ENCODE measurements at regions of chr12 and their contacts with region 1.

Region 1: GRCh38 chr12:6851921-6852650 is at the start of gene USP5:
- DNase-seq: peak; percentile 97 to 99 (median 99)
- H3K4me3 ChIP-seq: peak within 1 kb of the TSS; percentile 97
- H3K4me3 Mint-ChIP-seq: peak within 1 kb of the TSS; percentile 86 to 99 (median 94)
- H3K27ac ChIP-seq: peak within 1 kb of the TSS; percentile 77
- H3K27ac Mint-ChIP-seq: peak within 1 kb of the TSS; percentile 99 to 100 (median 100)
- H3K4me1 ChIP-seq: peaks cover 18% of the 10 kb centered on the region
- H3K4me1 Mint-ChIP-seq: peaks cover 20 to 38% (median 20%) of the 10 kb centered on the region in 3 donors
- H3K27me3 ChIP-seq: no peaks in the 10 kb centered on the region
- H3K27me3 Mint-ChIP-seq: no peaks in the 10 kb centered on the region
- total RNA-seq, gene USP5: 154 TPM

Region 2: GRCh38 chr12:6723607-6724396 is 128.3 kb before region 1 on chr12 and contains the start of gene COPS7A:
- CTCF ChIA-PET with region 1: interaction called, 9 read pairs
- POLR2A ChIA-PET with region 1: interaction called, 11 read pairs
- DNase-seq: peak; percentile 90 to 96 (median 92)
- H3K4me3 ChIP-seq: peak within 1 kb of the TSS; percentile 77
- H3K4me3 Mint-ChIP-seq: peak within 1 kb of the TSS; percentile 84 to 91 (median 87)
- H3K27ac ChIP-seq: peak within 1 kb of the TSS; percentile 67
- H3K27ac Mint-ChIP-seq: peak within 1 kb of the TSS; percentile 90 to 100 (median 97)
- H3K4me1 ChIP-seq: peaks cover 19% of the 10 kb centered on the region
- H3K4me1 Mint-ChIP-seq: peaks cover 22 to 32% (median 23%) of the 10 kb centered on the region in 3 donors
- H3K27me3 ChIP-seq: no peaks in the 10 kb centered on the region
- H3K27me3 Mint-ChIP-seq: no peaks in the 10 kb centered on the region
- total RNA-seq, gene COPS7A: 48.8 to 49.7 TPM

Region 3: GRCh38 chr12:6788972-6789924 is 62.8 kb before region 1 on chr12 and contains the start of gene CD4:
- CTCF ChIA-PET with region 1: no interaction called
- POLR2A ChIA-PET with region 1: no interaction called
- DNase-seq: no peak
- H3K4me3 ChIP-seq: peak within 1 kb of the TSS; percentile 86
- H3K4me3 Mint-ChIP-seq: peak within 1 kb of the TSS in 1 of 7 donors; percentile 7
- H3K27ac ChIP-seq: no peak within 1 kb of the TSS
- H3K27ac Mint-ChIP-seq: peak within 1 kb of the TSS in 1 of 8 donors; percentile 38
- H3K4me1 ChIP-seq: peaks cover 52% of the 10 kb centered on the region
- H3K4me1 Mint-ChIP-seq: peaks cover 17 to 28% (median 21%) of the 10 kb centered on the region in 3 donors
- H3K27me3 ChIP-seq: no peaks in the 10 kb centered on the region
- H3K27me3 Mint-ChIP-seq: peaks cover 3 to 5% of the 10 kb centered on the region in 2 donors
- total RNA-seq, gene CD4: 1.2 to 1.8 TPM

Region 4: DNA sequence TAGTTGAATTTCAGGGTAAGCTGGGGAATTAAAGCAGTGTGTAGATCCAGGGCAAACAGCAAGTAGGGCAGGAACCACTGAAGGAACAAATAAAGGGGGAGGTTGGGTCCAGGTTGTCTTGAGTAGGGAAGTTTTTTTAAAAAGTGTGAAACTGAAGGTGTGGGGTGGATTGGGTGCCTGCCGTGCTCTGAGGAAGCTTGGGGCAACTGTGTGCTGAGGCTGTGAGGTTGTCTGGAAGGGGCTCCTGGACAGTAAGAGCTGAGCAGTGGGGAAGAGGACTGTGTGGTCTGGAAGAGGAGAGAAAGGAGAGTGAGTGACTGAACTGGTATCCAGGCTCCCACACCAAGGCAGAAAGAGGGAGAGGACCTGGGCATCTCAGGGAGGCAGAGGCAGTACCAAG is 41.3 kb before region 1 on chr12:
- CTCF ChIA-PET with region 1: no interaction called
- POLR2A ChIA-PET with region 1: no interaction called
- DNase-seq: no peak
- H3K4me3 ChIP-seq: no peak overlapping the region
- H3K4me3 Mint-ChIP-seq: no peak overlapping the region
- H3K27ac ChIP-seq: no peak overlapping the region
- H3K27ac Mint-ChIP-seq: peak overlapping the region in 2 of 8 donors; percentile 23 to 39
- H3K4me1 ChIP-seq: no peaks in the 10 kb centered on the region
- H3K4me1 Mint-ChIP-seq: no peaks in the 10 kb centered on the region
- H3K27me3 ChIP-seq: no peaks in the 10 kb centered on the region
- H3K27me3 Mint-ChIP-seq: peaks cover 3 to 10% of the 10 kb centered on the region in 2 donors

Region 5: GRCh38 chr12:6825398-6826124 is 26.5 kb before region 1 on chr12:
- CTCF ChIA-PET with region 1: interaction called, 91 read pairs
- POLR2A ChIA-PET with region 1: interaction called, 23 read pairs
- DNase-seq: peak; percentile 62 to 80 (median 71)
- H3K4me3 ChIP-seq: no peak overlapping the region
- H3K4me3 Mint-ChIP-seq: peak overlapping the region in 1 of 7 donors; percentile 70
- H3K27ac ChIP-seq: no peak overlapping the region
- H3K27ac Mint-ChIP-seq: no peak overlapping the region
- H3K4me1 ChIP-seq: peaks cover 18% of the 10 kb centered on the region
- H3K4me1 Mint-ChIP-seq: peaks cover 20 to 36% (median 24%) of the 10 kb centered on the region in 3 donors
- H3K27me3 ChIP-seq: peaks cover 25% of the 10 kb centered on the region
- H3K27me3 Mint-ChIP-seq: peaks cover 26 to 68% of the 10 kb centered on the region in 2 donors

Region 6: GRCh38 chr12:6833189-6833890 is 18.7 kb before region 1 on chr12:
- CTCF ChIA-PET with region 1: interaction called, 91 read pairs
- POLR2A ChIA-PET with region 1: interaction called, 23 read pairs
- DNase-seq: no peak
- H3K4me3 ChIP-seq: no peak overlapping the region
- H3K4me3 Mint-ChIP-seq: no peak overlapping the region
- H3K27ac ChIP-seq: no peak overlapping the region
- H3K27ac Mint-ChIP-seq: no peak overlapping the region
- H3K4me1 ChIP-seq: peaks cover 12% of the 10 kb centered on the region
- H3K4me1 Mint-ChIP-seq: peaks cover 4 to 14% (median 8%) of the 10 kb centered on the region in 3 donors
- H3K27me3 ChIP-seq: peaks cover 3% of the 10 kb centered on the region
- H3K27me3 Mint-ChIP-seq: peaks cover 8 to 10% of the 10 kb centered on the region in 2 donors

Region 7: DNA sequence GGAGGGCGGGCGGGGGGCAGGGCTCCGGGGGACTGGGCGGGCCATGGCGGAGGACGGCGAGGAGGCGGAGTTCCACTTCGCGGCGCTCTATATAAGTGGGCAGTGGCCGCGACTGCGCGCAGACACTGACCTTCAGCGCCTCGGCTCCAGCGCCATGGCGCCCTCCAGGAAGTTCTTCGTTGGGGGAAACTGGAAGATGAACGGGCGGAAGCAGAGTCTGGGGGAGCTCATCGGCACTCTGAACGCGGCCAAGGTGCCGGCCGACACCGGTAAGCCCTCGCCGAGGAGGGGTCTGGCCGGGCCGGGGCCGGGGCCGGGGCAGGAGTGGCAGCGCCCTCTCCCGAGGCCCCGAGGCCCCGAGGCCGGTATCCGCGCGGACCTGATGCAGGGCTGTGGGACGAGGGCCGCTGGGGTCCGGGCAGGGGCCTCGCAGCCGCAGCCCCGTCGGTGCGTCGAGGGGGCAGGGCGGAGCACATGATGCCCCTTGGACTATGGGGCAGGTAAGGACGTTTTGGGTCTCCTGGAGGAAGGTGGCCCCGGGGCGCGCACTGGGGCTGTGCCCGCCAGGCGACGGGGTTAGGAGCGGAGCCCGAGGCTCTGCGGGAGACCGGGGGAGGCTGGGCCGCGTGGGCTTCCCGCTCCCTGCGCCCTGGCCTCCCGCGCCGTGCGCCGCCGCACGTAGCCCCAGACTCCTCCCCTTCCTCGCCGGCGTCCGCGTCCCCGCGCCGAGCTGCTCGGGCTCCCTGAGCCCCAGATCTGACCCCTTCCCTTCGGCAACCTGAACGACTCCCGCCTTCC is 15.5 kb after region 1 on chr12 and contains the start of gene TPI1:
- CTCF ChIA-PET with region 1: interaction called, 128 read pairs
- POLR2A ChIA-PET with region 1: interaction called, 46 read pairs
- DNase-seq: peak; percentile 62 to 85 (median 73)
- H3K4me3 ChIP-seq: peak within 1 kb of the TSS; percentile 58
- H3K4me3 Mint-ChIP-seq: peak within 1 kb of the TSS; percentile 87 to 98 (median 92)
- H3K27ac ChIP-seq: peak within 1 kb of the TSS; percentile 76
- H3K27ac Mint-ChIP-seq: peak within 1 kb of the TSS; percentile 85 to 96 (median 92)
- H3K4me1 ChIP-seq: peaks cover 38% of the 10 kb centered on the region
- H3K4me1 Mint-ChIP-seq: peaks cover 43 to 55% (median 47%) of the 10 kb centered on the region in 3 donors
- H3K27me3 ChIP-seq: no peaks in the 10 kb centered on the region
- H3K27me3 Mint-ChIP-seq: no peaks in the 10 kb centered on the region
- total RNA-seq, gene TPI1: 1,331 to 1,374 TPM

Region 8: DNA sequence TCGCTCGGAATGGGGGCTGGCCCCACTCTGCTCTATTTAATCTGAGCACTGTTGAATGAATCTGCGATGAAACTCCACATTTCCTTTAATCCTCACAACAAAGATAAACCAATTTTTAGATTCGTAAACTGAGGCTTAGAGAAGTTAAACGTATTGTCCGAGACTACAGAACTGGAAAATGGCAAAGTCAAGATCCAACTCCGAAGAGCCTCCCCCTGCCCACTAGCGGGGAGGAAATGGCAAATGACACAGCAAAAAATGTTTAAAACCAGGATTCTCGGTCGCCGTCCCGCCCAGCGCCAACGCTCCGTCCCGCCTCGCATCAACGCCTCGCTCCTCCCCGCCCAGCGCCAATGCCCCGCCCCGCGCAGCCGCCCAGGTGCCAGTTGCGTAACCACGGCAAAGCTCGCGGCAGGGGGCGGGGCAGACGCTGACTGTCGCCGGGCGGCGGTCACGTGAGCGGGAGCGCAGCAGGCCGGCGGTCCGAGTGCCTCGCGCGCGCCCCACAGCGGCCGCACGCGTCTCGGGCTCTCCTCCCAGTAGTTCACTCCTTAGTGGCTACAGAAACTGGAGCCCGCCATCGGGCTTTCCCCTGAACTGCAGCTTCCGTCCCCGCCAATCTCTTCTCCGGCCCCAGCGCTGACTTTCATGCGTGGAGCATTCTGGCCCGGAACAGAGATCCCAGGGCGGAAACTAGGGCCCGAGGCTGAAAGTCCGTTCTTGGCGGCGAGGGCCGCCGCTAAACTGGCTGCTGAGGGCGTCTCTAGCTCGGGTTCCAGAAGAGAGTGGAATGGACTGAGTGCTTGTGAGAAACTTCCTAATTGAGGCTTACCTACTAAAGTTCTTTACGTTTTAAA is 38.9 kb after region 1 on chr12:
- CTCF ChIA-PET with region 1: interaction called, 12 read pairs
- POLR2A ChIA-PET with region 1: interaction called, 15 read pairs
- DNase-seq: peak; percentile 97 to 100 (median 99)
- H3K4me3 ChIP-seq: peak overlapping the region; percentile 95
- H3K4me3 Mint-ChIP-seq: peak overlapping the region; percentile 81 to 93 (median 84)
- H3K27ac ChIP-seq: peak overlapping the region; percentile 92
- H3K27ac Mint-ChIP-seq: peak overlapping the region; percentile 89 to 98 (median 94)
- H3K4me1 ChIP-seq: peaks cover 12% of the 10 kb centered on the region
- H3K4me1 Mint-ChIP-seq: peaks cover 12 to 19% (median 12%) of the 10 kb centered on the region in 3 donors
- H3K27me3 ChIP-seq: no peaks in the 10 kb centered on the region
- H3K27me3 Mint-ChIP-seq: peaks cover 0 to 3% of the 10 kb centered on the region in 2 donors

Region 9: DNA sequence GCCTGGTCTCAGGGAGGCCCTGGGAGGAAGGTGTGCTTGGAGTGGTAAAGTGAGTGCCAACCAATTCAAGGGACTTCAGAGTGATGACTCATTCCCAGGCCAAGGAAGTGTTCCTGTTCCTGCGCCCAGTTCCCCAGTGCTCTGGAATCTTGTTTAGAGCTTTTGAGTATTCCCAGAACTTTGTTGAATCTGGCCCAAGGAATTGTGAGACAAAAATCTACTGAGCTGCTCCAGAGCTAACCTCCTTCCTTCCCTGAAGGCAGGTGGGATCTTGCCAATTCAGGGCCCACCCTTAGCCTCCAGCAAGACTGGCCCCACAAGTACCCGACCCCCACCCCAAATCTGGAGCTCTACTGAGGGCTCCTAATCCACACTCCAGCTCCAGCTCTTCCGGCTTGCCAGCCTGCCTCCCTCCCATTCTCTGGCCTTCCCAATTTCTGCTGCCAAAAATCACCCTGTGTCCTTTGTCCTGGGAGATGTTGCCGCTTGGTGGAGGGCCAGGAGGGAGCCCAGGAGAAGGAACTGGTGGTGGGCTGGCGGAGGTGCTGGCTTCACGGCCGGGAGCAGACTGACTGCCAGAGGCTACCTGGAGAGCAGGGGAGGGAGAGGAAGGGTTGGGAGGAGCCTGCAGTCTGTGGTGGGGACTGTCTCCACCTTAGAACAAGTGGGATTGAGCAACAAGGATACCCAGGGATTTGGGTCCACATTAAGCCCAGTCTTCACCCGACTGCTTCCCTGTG is 73.6 kb after region 1 on chr12:
- CTCF ChIA-PET with region 1: no interaction called
- POLR2A ChIA-PET with region 1: no interaction called
- DNase-seq: no peak
- H3K4me3 ChIP-seq: no peak overlapping the region
- H3K4me3 Mint-ChIP-seq: peak overlapping the region; percentile 17 to 97 (median 91)
- H3K27ac ChIP-seq: no peak overlapping the region
- H3K27ac Mint-ChIP-seq: peak overlapping the region in 7 of 8 donors; percentile 40 to 92 (median 74)
- H3K4me1 ChIP-seq: peaks cover 37% of the 10 kb centered on the region
- H3K4me1 Mint-ChIP-seq: peaks cover 32 to 47% (median 40%) of the 10 kb centered on the region in 3 donors
- H3K27me3 ChIP-seq: no peaks in the 10 kb centered on the region
- H3K27me3 Mint-ChIP-seq: no peaks in the 10 kb centered on the region

Region 10: DNA sequence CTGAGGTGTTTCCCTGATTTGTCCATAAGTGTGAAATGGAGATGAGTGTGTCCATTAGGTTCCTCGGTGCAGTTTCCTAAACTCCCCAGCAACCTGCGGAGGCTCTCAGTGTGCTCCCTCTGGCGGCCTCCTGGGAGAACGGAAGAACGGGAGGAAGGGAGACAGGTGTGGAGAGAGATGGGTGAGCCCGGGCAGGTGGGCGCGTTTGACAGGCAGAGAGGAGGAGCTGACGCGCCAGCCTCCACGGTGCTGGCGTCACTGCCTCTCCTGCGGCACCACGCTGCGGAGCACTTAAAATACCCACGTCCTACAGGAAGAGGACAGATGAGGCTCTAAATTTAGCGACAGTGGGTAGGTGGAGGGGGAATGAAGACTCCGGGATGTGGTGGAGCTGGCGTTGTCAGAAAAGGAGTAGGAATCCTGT is 310.6 kb after region 1 on chr12:
- CTCF ChIA-PET with region 1: no interaction called
- POLR2A ChIA-PET with region 1: no interaction called
- DNase-seq: peak in 1 of 5 donors; percentile 16
- H3K4me3 ChIP-seq: no peak overlapping the region
- H3K4me3 Mint-ChIP-seq: peak overlapping the region in 5 of 7 donors; percentile 4 to 54 (median 46)
- H3K27ac ChIP-seq: no peak overlapping the region
- H3K27ac Mint-ChIP-seq: no peak overlapping the region
- H3K4me1 ChIP-seq: peaks cover 11% of the 10 kb centered on the region
- H3K4me1 Mint-ChIP-seq: peaks cover 8 to 12% (median 8%) of the 10 kb centered on the region in 3 donors
- H3K27me3 ChIP-seq: peaks cover 7% of the 10 kb centered on the region
- H3K27me3 Mint-ChIP-seq: peaks cover 27 to 44% of the 10 kb centered on the region in 2 donors

Measured in CD8-positive, alpha-beta memory T cell (primary cell).